PC-3 (cell line): ENCODE measurements at regions of chr1 and their contacts with region 1.

Region 1: DNA sequence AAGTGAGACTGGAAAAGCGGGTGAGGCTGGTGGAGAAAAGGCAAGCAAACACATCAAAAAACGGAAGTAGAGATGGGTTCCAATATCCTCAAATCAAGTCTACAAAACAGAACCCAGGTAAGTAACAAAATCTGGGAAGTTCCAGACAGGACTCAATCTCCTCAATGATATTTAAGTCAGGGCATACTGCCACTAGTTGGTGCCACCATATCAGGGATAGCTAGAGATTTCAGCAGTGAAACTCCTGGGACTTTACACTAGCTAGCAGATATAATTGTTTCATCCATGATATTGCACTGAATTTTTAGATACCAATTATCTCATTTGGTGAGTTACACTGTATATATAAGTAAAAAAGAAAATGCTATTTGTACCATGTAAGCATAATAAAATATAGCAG is 52.0 kb downstream of the EYA3 start:
- DNase-seq: peak; percentile 29
- ATAC-seq: peak; percentile 63; the same call in 1 of the 2 replicates
- H3K4me3 ChIP-seq: no peak overlapping the region
- H3K27ac ChIP-seq: no peak overlapping the region
- H3K4me1 ChIP-seq: peaks cover under 1% of the 10 kb centered on the region; the same call in 1 of the 2 replicates
- H3K27me3 ChIP-seq: no peaks in the 10 kb centered on the region
- CTCF ChIP-seq: peak; percentile 48

Region 2: GRCh38 chr1:27804791-27805190 is 231.6 kb before region 1 on chr1:
- CTCF ChIA-PET with region 1: no interaction called
- POLR2A ChIA-PET with region 1: no interaction called
- intact Hi-C with region 1: no loop called
- DNase-seq: no peak
- ATAC-seq: no peak
- H3K4me3 ChIP-seq: no peak overlapping the region
- H3K27ac ChIP-seq: no peak overlapping the region
- H3K4me1 ChIP-seq: no peaks in the 10 kb centered on the region
- H3K27me3 ChIP-seq: no peaks in the 10 kb centered on the region
- CTCF ChIP-seq: no peak

Region 3: GRCh38 chr1:28208818-28209441 is 172.5 kb after region 1 on chr1:
- CTCF ChIA-PET with region 1: interaction called, 4 read pairs
- POLR2A ChIA-PET with region 1: no interaction called
- intact Hi-C with region 1: loop called (anchors 1 kb)
- DNase-seq: peak; percentile 80
- ATAC-seq: peak; percentile 88
- H3K4me3 ChIP-seq: no peak overlapping the region
- H3K27ac ChIP-seq: no peak overlapping the region
- H3K4me1 ChIP-seq: no peaks in the 10 kb centered on the region
- H3K27me3 ChIP-seq: no peaks in the 10 kb centered on the region
- CTCF ChIP-seq: peak; percentile 91